Common myeloid progenitor, CD34-positive (primary cell): ENCODE measurements at regions of chr3 and their contacts with region 1.

Region 1: GRCh38 chr3:186570096-186570940 is at the start of gene DNAJB11:
- DNase-seq: peak; percentile 100
- H3K4me3 ChIP-seq: peak within 1 kb of the TSS; percentile 85 to 99 (median 89)
- H3K27ac ChIP-seq: peak within 1 kb of the TSS; percentile 99 to 100
- H3K4me1 ChIP-seq: peaks cover 24 to 39% (median 33%) of the 10 kb centered on the region in 4 experiments
- H3K27me3 ChIP-seq: no peaks in the 10 kb centered on the region

Region 2: GRCh38 chr3:186583831-186584230 is 13.5 kb after region 1 on chr3:
- CTCF ChIA-PET with region 1: interaction called, 19 read pairs
- POLR2A ChIA-PET with region 1: interaction called, 9 read pairs
- DNase-seq: no peak
- H3K4me3 ChIP-seq: no peak overlapping the region
- H3K27ac ChIP-seq: no peak overlapping the region
- H3K4me1 ChIP-seq: no peaks in the 10 kb centered on the region
- H3K27me3 ChIP-seq: no peaks in the 10 kb centered on the region

Region 3: DNA sequence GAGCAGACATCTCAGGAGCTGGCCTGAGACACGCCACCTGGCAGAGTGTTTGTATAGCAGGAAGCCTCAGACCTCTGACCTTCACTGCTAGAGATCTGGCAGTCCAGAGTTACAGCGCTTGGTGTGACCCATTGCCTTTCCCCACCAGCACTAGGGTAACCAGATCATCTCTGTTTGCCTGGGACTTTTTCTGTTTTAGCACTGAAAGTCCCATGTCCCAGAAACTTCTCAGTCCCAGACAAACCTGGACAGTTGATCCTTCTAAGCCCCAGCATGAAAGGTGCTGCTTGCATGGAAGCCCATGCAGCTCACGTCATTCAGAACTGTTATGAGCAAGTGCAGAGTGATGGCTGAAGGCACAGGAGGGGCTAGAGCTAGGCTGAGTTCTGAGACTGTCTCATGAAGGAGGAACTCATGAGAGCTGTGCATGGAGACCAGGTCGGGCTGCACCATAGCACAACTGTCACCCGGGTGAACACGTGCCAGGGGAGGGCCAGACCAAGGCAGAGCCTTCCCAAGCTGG is 24.3 kb after region 1 on chr3:
- CTCF ChIA-PET with region 1: no interaction called
- POLR2A ChIA-PET with region 1: no interaction called
- DNase-seq: no peak
- H3K4me3 ChIP-seq: no peak overlapping the region
- H3K27ac ChIP-seq: no peak overlapping the region
- H3K4me1 ChIP-seq: no peaks in the 10 kb centered on the region
- H3K27me3 ChIP-seq: no peaks in the 10 kb centered on the region